Naive thymus-derived CD8-positive, alpha-beta T cell (primary cell): ENCODE measurements at regions of chr17 and their contacts with region 1.

Region 1: GRCh38 chr17:73710095-73710592 is 65.9 kb upstream of the SDK2 start:
- DNase-seq: peak; percentile 41 to 84 (median 66)
- ATAC-seq: peak; percentile 64 to 84
- H3K4me3 Mint-ChIP-seq: no peak overlapping the region
- H3K27ac Mint-ChIP-seq: peak overlapping the region in 5 of 10 donors; percentile 5 to 83 (median 15)
- H3K4me1 Mint-ChIP-seq: peaks cover 10 to 19% (median 15%) of the 10 kb centered on the region in 4 donors
- H3K27me3 Mint-ChIP-seq: peaks cover 0 to 2% (median 0%) of the 10 kb centered on the region in 5 donors

Region 2: DNA sequence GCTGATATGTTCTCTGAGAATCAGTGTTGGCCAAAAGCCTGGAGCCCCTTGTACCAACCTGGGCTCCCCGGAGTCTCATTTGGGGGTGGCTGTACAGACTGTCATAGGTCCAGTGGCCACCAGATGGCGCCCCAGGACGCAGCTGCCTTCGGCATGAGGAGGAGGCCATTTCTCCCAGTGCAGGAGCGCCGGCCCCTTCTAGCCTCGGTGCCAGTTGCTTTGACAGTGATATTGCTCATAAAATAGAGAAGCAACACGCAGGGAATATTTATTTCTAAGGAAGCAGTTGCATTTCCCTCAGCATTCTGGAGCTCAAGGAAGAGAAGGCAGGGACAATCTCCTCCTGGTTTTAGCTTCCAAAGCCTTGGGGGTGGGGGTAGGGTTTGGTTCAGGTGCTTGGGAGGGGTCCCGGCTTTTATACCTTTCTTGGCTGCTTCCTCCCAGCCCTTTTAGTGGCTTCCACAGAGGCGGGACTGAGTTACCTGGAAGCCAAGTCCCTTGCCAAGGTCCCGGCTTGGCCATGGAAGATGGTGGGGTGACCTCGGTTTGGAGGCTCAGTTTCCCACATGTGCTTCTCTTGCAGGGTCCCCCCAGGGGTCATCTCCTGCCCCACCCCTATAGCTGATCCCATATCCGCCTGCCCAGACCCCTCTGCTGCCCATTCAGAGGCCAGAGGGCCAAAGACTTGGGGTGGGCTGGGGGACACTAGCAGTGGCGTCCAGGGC is 280.5 kb before region 1 on chr17:
- POLR2A ChIA-PET with region 1: interaction called, 11 read pairs
- DNase-seq: peak; percentile 72 to 93 (median 84)
- ATAC-seq: peak; percentile 97 to 99
- H3K4me3 Mint-ChIP-seq: peak overlapping the region in 6 of 10 donors; percentile 33 to 64 (median 43)
- H3K27ac Mint-ChIP-seq: peak overlapping the region in 7 of 10 donors; percentile 12 to 83 (median 43)
- H3K4me1 Mint-ChIP-seq: peaks cover 4 to 18% (median 6%) of the 10 kb centered on the region in 4 donors
- H3K27me3 Mint-ChIP-seq: no peaks in the 10 kb centered on the region

Region 3: GRCh38 chr17:73639322-73639721 is 70.8 kb before region 1 on chr17:
- POLR2A ChIA-PET with region 1: no interaction called
- DNase-seq: no peak
- ATAC-seq: no peak
- H3K4me3 Mint-ChIP-seq: no peak overlapping the region
- H3K27ac Mint-ChIP-seq: peak overlapping the region in 1 of 10 donors; percentile 15
- H3K4me1 Mint-ChIP-seq: peaks cover 17 to 52% (median 26%) of the 10 kb centered on the region in 4 donors
- H3K27me3 Mint-ChIP-seq: no peaks in the 10 kb centered on the region

Region 4: GRCh38 chr17:73720187-73720834 is 10.2 kb after region 1 on chr17:
- POLR2A ChIA-PET with region 1: interaction called, 12 read pairs
- DNase-seq: peak in 3 of 10 donors; percentile 19 to 72 (median 66)
- ATAC-seq: peak; percentile 13 to 16
- H3K4me3 Mint-ChIP-seq: peak overlapping the region in 3 of 10 donors; percentile 19 to 65 (median 50)
- H3K27ac Mint-ChIP-seq: peak overlapping the region in 8 of 10 donors; percentile 43 to 90 (median 68)
- H3K4me1 Mint-ChIP-seq: peaks cover 27 to 66% (median 48%) of the 10 kb centered on the region in 4 donors
- H3K27me3 Mint-ChIP-seq: peaks cover 0 to 2% (median 0%) of the 10 kb centered on the region in 5 donors

Region 5: DNA sequence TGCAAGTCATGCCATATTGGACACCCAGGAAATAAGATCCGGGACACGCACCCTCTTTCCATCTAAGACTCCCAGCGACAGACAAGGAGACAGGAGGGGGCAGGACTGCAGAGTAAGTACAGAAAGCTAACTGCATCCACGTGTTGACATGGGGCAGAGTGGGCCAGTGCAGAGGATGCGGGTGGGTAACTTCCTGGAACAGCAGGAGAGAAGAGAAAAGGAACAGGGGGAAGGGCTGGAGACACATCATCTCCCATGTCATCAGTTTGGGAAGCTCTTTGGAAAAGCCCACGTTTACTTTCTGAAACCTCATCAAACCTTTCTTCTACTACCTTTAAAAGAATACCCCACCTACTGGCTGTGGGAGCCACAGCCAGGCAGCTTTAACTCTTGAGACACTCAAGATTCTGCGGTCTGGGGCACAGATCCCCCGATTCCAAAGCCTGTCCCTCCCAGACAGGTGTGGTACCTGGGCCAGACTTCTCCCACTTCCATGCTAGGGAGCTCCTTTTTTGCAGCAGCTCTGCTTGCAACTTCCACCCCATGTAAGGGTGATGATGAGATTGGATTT is 219.8 kb after region 1 on chr17:
- POLR2A ChIA-PET with region 1: no interaction called
- DNase-seq: no peak
- ATAC-seq: no peak
- H3K4me3 Mint-ChIP-seq: no peak overlapping the region
- H3K27ac Mint-ChIP-seq: no peak overlapping the region
- H3K4me1 Mint-ChIP-seq: peaks cover 3 to 13% (median 7%) of the 10 kb centered on the region in 4 donors
- H3K27me3 Mint-ChIP-seq: peaks cover 0 to 6% (median 0%) of the 10 kb centered on the region in 5 donors